GM10248 (cell line): ENCODE measurements at regions of chr14 and their contacts with region 1.

Region 1: GRCh38 chr14:92651106-92651757 is 97.2 kb downstream of the LGMN start:
- DNase-seq: peak; percentile 88
- CTCF ChIP-seq: no peak

Region 2: GRCh38 chr14:92670160-92670559 is 18.9 kb after region 1 on chr14:
- CTCF ChIA-PET with region 1: interaction called, 5 read pairs
- POLR2A ChIA-PET with region 1: interaction called, 12 read pairs
- DNase-seq: no peak
- CTCF ChIP-seq: peak; percentile 13